ENCODE measurements at regions of chr2 and their contacts with region 1.

Region 1: DNA sequence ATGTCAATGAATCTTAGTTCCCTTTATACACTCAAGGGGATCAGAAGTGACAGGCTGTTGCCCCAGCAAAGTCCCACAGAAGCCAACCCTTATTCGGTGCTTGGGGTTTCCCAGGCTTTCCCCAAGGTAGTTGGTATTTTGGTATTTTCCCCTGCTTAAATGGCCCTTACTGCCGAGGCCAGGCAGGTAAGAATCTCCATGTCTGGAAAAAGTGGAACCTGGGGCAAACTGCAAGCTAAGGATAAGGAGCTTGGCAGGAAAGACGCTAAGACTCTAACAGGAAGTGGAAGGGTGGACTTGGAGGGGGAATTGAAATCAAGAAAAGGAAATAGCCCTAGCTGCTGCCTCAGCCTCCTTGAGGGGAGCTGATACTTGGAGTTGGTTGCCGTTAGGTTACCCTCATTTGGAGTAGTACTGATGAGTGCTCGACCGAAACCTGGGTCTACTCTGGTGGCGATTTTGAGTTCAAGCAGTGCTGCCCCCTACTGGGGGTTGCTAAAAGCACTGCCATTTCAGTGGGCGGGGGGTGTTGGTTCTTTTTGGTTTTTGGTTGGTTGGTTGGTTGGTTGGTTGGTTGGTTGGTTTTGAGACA is 3.3 kb upstream of the GPBAR1 start:
- DNase-seq: no peak
- ATAC-seq: peak in 4 of 8 donors; percentile 9 to 20 (median 13)
- H3K4me3 ChIP-seq: no peak overlapping the region
- H3K27ac ChIP-seq: peak overlapping the region in 6 of 10 donors; percentile 11 to 95 (median 37)
- H3K4me1 ChIP-seq: peaks cover 30 to 72% (median 54%) of the 10 kb centered on the region in 9 donors
- H3K27me3 ChIP-seq: no peaks in the 10 kb centered on the region
- CTCF ChIP-seq: peak in 8 of 9 donors; percentile 29 to 64 (median 48)

Region 2: GRCh38 chr2:218216674-218217359 is 40.7 kb before region 1 on chr2 and contains the start of gene ARPC2:
- intact Hi-C with region 1: loop called in 6 of 10 experiments (anchors 5 kb)
- DNase-seq: peak; percentile 95 to 96
- ATAC-seq: peak; percentile 97 to 99 (median 98)
- H3K4me3 ChIP-seq: peak within 1 kb of the TSS; percentile 78 to 97 (median 94)
- H3K27ac ChIP-seq: peak within 1 kb of the TSS; percentile 58 to 99 (median 94)
- H3K4me1 ChIP-seq: peaks cover 11 to 53% (median 44%) of the 10 kb centered on the region in 9 donors
- H3K27me3 ChIP-seq: no peaks in the 10 kb centered on the region
- CTCF ChIP-seq: peak in 2 of 9 donors; percentile 5 to 20
- total RNA-seq, gene ARPC2: 120 to 213 (median 134) TPM

Region 3: GRCh38 chr2:218223046-218223445 is 34.4 kb before region 1 on chr2:
- intact Hi-C with region 1: loop called in 6 of 10 experiments (anchors 5 kb)
- DNase-seq: no peak
- ATAC-seq: no peak
- H3K4me3 ChIP-seq: no peak overlapping the region
- H3K27ac ChIP-seq: peak overlapping the region in 1 of 10 donors; percentile 27
- H3K4me1 ChIP-seq: peaks cover 11 to 97% (median 65%) of the 10 kb centered on the region in 9 donors
- H3K27me3 ChIP-seq: no peaks in the 10 kb centered on the region
- CTCF ChIP-seq: no peak

Region 4: DNA sequence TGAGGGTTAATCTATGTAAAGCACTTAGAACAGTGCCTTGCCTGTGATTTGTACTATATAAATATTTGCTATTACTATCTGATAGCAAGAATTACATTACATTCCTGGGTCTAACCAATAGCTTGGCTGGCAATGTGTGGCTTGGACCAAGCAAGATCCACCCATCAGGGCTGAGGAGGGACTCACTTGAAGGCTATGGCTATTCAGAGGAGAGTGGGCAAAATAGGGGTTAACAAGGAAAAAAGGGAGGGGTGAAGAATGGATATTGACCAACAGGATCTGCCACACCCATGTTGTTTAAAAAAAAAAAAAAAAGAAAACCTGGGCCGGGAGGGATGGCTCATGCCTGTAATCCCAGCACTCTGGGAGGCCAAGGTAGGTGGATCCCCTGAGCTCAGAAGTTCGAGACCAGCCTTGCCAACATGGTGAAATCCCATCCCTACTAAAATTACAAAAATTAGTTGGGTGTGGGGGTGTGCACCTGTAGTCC is 54.8 kb after region 1 on chr2:
- intact Hi-C with region 1: no loop called
- DNase-seq: no peak
- ATAC-seq: no peak
- H3K4me3 ChIP-seq: no peak overlapping the region
- H3K27ac ChIP-seq: no peak overlapping the region
- H3K4me1 ChIP-seq: peaks cover 0 to 24% (median 0%) of the 10 kb centered on the region in 9 donors
- H3K27me3 ChIP-seq: no peaks in the 10 kb centered on the region
- CTCF ChIP-seq: no peak

Region 5: GRCh38 chr2:218354850-218355443 is 97.5 kb after region 1 on chr2:
- intact Hi-C with region 1: no loop called
- DNase-seq: no peak
- ATAC-seq: no peak
- H3K4me3 ChIP-seq: no peak overlapping the region
- H3K27ac ChIP-seq: no peak overlapping the region
- H3K4me1 ChIP-seq: peaks cover 0 to 13% (median 0%) of the 10 kb centered on the region in 9 donors
- H3K27me3 ChIP-seq: no peaks in the 10 kb centered on the region
- CTCF ChIP-seq: no peak

Region 6: DNA sequence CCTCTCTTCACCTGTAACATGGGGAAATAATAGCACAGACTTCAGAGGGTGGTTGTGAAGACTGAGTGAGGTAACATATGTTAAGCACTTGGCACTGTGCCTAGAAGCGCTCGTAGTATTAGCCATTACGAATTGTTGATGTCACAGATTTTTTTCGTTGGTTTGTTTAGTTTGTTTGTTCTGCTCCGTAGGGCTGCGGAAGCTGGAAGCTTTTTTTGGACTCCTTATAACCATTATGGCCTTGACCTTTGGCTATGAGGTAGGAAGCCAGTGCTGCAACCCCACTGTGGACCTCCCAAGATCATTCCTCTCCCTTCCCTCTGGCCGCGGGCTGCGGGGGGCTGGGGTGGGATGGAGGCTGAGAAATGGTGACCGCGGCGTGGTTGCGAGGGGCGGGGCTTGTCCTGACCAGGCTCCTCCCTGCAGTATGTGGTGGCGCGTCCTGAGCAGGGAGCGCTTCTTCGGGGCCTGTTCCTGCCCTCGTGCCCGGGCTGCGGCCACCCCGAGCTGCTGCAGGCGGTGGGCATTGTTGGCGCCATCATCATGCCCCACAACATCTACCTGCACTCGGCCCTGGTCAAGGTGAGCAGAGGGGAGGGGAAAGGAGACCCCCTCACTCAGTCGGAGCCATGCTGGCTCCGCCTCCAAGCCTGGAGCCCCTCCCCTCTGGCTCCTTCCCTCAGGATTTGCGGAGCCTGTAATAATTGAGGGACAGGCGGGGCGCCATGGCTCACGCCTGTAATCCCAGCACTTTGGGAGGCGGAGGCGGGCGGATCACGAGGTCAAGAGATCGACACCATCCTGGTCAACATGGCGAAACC is 130.1 kb after region 1 on chr2:
- intact Hi-C with region 1: no loop called
- DNase-seq: peak; percentile 49 to 68
- ATAC-seq: peak; percentile 70 to 90 (median 86)
- H3K4me3 ChIP-seq: peak overlapping the region; percentile 8 to 55 (median 46)
- H3K27ac ChIP-seq: peak overlapping the region in 8 of 10 donors; percentile 19 to 76 (median 39)
- H3K4me1 ChIP-seq: peaks cover 0 to 51% (median 7%) of the 10 kb centered on the region in 9 donors
- H3K27me3 ChIP-seq: no peaks in the 10 kb centered on the region
- CTCF ChIP-seq: no peak

Region 7: DNA sequence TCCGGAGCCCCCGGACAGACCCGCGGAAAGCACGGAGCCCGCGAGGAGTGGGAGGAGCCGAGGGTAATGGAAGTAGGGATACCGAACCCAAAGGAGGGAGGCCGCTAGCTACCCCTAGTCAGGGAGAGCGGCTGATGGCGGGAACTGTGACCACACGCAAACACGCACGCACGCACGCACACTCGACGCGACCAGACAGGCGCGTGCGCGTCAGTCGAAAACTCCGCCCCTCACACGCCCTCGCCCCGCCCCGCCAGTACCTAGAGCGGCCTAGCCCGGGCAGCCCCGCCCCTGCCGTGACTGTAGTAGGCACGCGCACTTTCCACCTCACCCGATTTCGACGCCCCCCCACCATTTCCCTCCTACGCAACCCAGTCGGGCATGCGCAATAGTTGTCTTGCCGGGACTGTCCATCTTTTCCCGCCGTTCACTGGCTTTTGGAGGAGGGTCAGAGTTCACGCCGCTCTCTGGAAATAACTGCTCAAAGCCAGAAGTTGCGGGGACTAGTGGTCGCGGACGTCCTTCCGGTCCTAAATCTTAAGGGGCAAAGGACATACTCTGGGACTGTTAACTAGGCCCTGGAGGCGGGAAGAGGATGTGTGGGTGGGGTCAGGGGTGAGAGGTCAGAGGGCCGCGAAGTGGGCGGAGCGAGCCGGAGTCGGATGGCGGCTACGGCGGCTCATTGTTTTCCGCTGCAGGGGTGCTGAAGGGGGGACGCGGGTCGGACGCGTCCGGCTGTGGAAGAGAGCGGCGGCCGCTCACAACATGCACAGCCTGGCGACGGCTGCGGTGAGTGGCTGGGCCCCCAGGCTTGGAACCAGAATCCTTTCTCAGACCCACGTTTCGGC is 310.9 kb after region 1 on chr2 and contains the starts of genes CNOT9 and USP37:
- intact Hi-C with region 1: no loop called
- DNase-seq: peak; percentile 100
- ATAC-seq: peak; percentile 97 to 99 (median 98)
- H3K4me3 ChIP-seq: peak within 1 kb of the TSS; percentile 61 to 96 (median 84)
- H3K27ac ChIP-seq: peak within 1 kb of the TSS; percentile 68 to 97 (median 94)
- H3K4me1 ChIP-seq: peaks cover 8 to 49% (median 45%) of the 10 kb centered on the region in 9 donors
- H3K27me3 ChIP-seq: no peaks in the 10 kb centered on the region
- CTCF ChIP-seq: no peak
- total RNA-seq, gene CNOT9: 15.7 to 28.2 (median 21.1) TPM
- total RNA-seq, gene USP37: 6.3 to 11.1 (median 8.5) TPM

Measured in heart right ventricle (tissue), 16 donors.